Adrenal gland (tissue), 19 donors: ENCODE measurements at regions of chr4 and their contacts with region 1.

Region 1: DNA sequence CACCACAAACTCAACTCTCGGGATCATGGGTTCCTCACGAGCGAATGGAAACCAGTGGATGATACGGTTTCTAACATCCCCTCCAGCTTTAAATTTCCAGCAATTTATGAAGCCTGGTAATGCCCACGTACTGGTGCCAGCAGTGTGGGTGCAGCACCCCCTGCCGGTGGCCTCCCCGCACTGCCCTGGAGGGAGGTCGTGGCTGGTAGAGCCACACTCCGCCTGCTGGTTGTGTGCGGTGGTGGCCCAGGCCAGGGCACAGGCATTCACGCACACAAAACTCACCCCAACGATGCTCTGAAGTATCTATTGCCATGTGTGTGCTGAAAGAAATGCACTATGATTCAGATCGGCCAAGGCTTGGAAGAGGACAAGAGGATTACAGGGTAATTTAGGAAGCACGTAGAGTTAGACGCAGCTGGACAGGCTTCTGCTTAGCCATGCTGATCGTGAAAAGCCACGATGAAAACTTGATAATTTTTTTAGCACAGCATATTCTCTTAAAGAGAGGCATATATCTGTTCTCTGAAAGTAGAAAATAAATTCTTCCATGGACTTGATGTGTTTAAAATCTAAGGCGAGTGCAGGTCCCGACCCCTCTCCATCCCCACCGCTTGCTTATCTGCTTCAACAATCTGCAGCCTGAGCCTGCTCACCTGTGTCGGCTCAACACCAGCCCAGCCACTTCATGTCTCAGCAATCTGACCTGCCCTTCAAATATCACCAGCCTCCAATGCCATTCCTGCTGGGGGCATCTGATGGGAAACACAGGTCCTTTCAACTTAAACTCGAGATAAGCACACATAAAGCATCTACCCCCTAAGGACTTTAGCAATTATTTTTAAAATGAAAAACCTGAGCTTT is 59.0 kb downstream of the SCD5 start:
- DNase-seq: peak; percentile 55 to 90 (median 74)
- H3K4me3 ChIP-seq: no peak overlapping the region
- H3K27ac ChIP-seq: peak overlapping the region in 1 of 5 donors; percentile 20
- H3K4me1 ChIP-seq: peaks cover 1 to 2% of the 10 kb centered on the region in 2 donors
- H3K27me3 ChIP-seq: no peaks in the 10 kb centered on the region
- CTCF ChIP-seq: peak; percentile 72 to 99 (median 95)
- POLR2A ChIP-seq: no peak

Region 2: GRCh38 chr4:82320356-82320755 is 419.2 kb before region 1 on chr4:
- intact Hi-C with region 1: no loop called
- DNase-seq: no peak
- H3K4me3 ChIP-seq: no peak overlapping the region
- H3K27ac ChIP-seq: no peak overlapping the region
- H3K4me1 ChIP-seq: no peaks in the 10 kb centered on the region
- H3K27me3 ChIP-seq: no peaks in the 10 kb centered on the region
- CTCF ChIP-seq: no peak
- POLR2A ChIP-seq: no peak

Region 3: GRCh38 chr4:82428969-82429727 is 310.4 kb before region 1 on chr4:
- intact Hi-C with region 1: no loop called
- DNase-seq: peak; percentile 90 to 96 (median 93)
- H3K4me3 ChIP-seq: peak overlapping the region; percentile 82 to 95 (median 92)
- H3K27ac ChIP-seq: peak overlapping the region; percentile 78 to 98 (median 97)
- H3K4me1 ChIP-seq: peaks cover 20 to 36% of the 10 kb centered on the region in 2 donors
- H3K27me3 ChIP-seq: no peaks in the 10 kb centered on the region
- CTCF ChIP-seq: peak; percentile 61 to 99 (median 81)
- POLR2A ChIP-seq: peak; percentile 70 to 83

Region 4: GRCh38 chr4:82462415-82462831 is 277.1 kb before region 1 on chr4:
- intact Hi-C with region 1: loop called (anchors 10 kb)
- DNase-seq: peak; percentile 86 to 99 (median 94)
- H3K4me3 ChIP-seq: no peak overlapping the region
- H3K27ac ChIP-seq: peak overlapping the region in 4 of 5 donors; percentile 0 to 70 (median 38)
- H3K4me1 ChIP-seq: peaks cover 4 to 9% of the 10 kb centered on the region in 2 donors
- H3K27me3 ChIP-seq: no peaks in the 10 kb centered on the region
- CTCF ChIP-seq: peak; percentile 64 to 88 (median 80)
- POLR2A ChIP-seq: no peak